CD8-positive, alpha-beta T cell (primary cell): ENCODE measurements at regions of chr2 and their contacts with region 1.

Region 1: DNA sequence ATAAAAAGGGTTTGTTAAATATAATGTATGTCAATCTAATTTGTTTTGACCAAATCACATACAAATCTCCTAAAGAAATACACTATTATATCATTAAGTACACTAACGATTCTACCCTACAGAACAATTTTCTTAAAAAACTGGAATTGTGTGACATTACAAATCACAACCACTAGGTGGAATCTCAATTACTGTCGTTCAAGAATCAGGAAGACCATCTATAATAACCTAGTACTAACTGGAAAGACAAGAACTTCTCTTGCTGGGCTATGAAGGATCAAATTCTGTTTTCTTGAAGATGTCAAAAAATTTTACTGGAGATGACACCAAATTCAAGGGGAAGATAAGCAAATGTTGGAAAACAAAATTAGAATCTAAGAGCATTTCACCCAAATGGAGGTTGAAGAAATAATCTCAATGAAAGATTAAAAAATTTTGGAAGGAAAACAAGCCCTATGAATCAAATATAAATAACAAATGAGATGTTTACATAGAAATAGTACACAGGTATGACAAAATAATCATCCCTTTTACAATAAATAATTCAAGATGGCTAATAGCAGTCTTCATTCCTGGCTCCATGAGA is 110.9 kb downstream of the STK39 start:
- DNase-seq: peak in 2 of 9 experiments; percentile 49 to 61
- ATAC-seq: peak; percentile 54
- H3K4me3 ChIP-seq: no peak overlapping the region
- H3K4me3 Mint-ChIP-seq: no peak overlapping the region
- H3K27ac ChIP-seq: no peak overlapping the region
- H3K27ac Mint-ChIP-seq: peak overlapping the region; percentile 75
- H3K4me1 ChIP-seq: no peaks in the 10 kb centered on the region
- H3K4me1 Mint-ChIP-seq: peaks cover 5% of the 10 kb centered on the region
- H3K27me3 ChIP-seq: no peaks in the 10 kb centered on the region
- H3K27me3 Mint-ChIP-seq: no peaks in the 10 kb centered on the region
- CTCF ChIP-seq: peak; percentile 65

Region 2: DNA sequence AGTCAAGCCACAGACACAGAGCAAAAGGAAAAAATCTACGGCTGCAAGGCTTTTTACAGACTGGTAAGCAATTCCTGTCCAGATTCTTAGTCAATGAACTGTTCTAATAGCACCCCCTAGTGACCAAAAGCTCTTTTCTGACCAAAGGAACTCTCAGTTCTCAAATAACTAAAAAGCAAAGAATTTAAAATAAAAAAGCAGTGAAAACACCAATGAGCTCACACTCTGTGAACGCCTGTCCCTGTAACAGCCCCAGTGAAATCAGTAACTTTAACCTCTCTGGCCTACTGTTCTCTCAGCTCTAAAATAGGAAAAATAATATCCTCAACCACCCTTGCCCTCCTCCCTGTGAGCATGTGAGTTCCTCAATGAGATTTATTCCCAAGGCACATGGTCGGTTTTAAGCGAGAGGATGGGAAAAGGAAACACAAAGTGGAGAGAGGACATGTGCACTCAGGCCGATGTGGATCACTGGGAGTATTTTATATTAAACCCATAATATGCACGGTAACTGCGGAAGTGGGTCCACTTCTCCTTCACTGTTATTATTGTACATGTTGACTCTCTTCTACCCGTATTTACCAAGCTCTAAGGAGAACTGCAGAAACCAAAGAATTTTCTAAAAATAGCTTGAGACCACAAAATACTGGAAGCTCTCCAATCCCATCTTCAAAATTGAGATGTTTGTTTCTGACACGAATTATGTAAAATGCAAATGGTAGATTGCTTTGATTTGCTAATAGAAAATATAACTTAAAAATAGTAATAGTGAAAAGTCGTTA is 17.6 kb before region 1 on chr2:
- CTCF ChIA-PET with region 1: interaction called, 12 read pairs
- POLR2A ChIA-PET with region 1: interaction called, 3 read pairs
- intact Hi-C with region 1: no loop called
- DNase-seq: peak in 3 of 9 experiments; percentile 8 to 58 (median 48)
- ATAC-seq: no peak
- H3K4me3 ChIP-seq: no peak overlapping the region
- H3K4me3 Mint-ChIP-seq: no peak overlapping the region
- H3K27ac ChIP-seq: no peak overlapping the region
- H3K27ac Mint-ChIP-seq: no peak overlapping the region
- H3K4me1 ChIP-seq: no peaks in the 10 kb centered on the region
- H3K4me1 Mint-ChIP-seq: no peaks in the 10 kb centered on the region
- H3K27me3 ChIP-seq: no peaks in the 10 kb centered on the region
- H3K27me3 Mint-ChIP-seq: no peaks in the 10 kb centered on the region
- CTCF ChIP-seq: peak; percentile 54

Region 3: DNA sequence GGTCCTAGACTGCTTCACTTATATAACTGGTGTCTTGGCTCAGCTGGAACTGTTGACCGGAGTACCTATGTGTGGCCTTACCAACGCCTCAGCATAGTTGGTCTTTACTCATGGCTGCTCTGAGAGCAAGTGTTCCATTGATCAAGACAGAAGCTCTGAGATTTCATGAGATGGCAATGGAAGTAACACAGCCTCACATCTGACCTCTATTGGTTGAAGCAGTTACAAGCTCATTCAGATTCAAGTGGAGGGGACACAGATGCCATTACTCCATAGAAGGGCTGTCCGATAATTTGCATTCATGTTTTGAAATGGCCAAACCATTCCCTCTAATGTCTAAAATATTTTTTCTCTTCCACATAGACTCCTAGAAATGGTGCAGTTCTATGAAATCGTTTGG is 157.3 kb after region 1 on chr2:
- CTCF ChIA-PET with region 1: interaction called, 4 read pairs
- POLR2A ChIA-PET with region 1: no interaction called
- intact Hi-C with region 1: loop called (anchors 2 to 5 kb)
- DNase-seq: peak in 2 of 9 experiments; percentile 10 to 24
- ATAC-seq: no peak
- H3K4me3 ChIP-seq: no peak overlapping the region
- H3K4me3 Mint-ChIP-seq: no peak overlapping the region
- H3K27ac ChIP-seq: no peak overlapping the region
- H3K27ac Mint-ChIP-seq: no peak overlapping the region
- H3K4me1 ChIP-seq: no peaks in the 10 kb centered on the region
- H3K4me1 Mint-ChIP-seq: no peaks in the 10 kb centered on the region
- H3K27me3 ChIP-seq: no peaks in the 10 kb centered on the region
- H3K27me3 Mint-ChIP-seq: no peaks in the 10 kb centered on the region
- CTCF ChIP-seq: no peak

Region 4: GRCh38 chr2:168687314-168687713 is 550.8 kb after region 1 on chr2:
- CTCF ChIA-PET with region 1: no interaction called
- POLR2A ChIA-PET with region 1: no interaction called
- intact Hi-C with region 1: loop called in 1 of 2 experiments (anchors 10 kb)
- DNase-seq: peak in 3 of 9 experiments; percentile 11 to 39 (median 20)
- ATAC-seq: no peak
- H3K4me3 ChIP-seq: no peak overlapping the region
- H3K4me3 Mint-ChIP-seq: no peak overlapping the region
- H3K27ac ChIP-seq: no peak overlapping the region
- H3K27ac Mint-ChIP-seq: no peak overlapping the region
- H3K4me1 ChIP-seq: no peaks in the 10 kb centered on the region
- H3K4me1 Mint-ChIP-seq: peaks cover 3% of the 10 kb centered on the region
- H3K27me3 ChIP-seq: no peaks in the 10 kb centered on the region
- H3K27me3 Mint-ChIP-seq: no peaks in the 10 kb centered on the region
- CTCF ChIP-seq: peak; percentile 38

Region 5: DNA sequence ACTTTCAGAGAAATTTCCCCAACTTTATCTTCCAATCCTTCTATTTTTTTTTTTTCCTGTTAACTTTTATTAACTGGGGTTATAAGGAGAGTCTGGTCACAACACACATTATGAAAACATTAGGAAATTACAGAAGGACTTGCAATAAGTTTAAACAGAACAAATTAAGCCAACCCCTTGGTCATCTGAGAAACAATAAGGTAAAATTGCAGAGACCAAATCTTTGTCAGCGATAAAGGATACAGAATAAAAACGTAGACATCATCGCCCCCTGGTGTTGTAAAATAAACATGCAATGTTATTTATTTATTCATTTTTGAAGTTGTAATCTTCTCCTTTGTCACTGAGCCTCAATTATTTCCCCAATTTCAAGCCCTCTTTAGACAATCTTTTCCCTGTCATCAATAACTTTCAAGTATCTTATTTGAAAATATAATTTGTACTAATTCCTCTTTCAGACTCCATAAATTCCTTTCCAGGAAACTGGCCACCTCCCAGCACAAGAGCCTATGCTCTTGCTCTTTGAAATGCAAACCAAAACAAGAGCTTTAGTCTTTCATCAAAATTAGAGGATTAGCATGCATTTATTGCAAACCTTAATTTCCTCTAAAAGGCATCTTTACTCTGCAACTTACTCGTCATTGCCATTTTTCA is 784.1 kb after region 1 on chr2:
- CTCF ChIA-PET with region 1: interaction called, 3 read pairs
- POLR2A ChIA-PET with region 1: no interaction called
- intact Hi-C with region 1: loop called in 1 of 2 experiments (anchors 1 kb)
- DNase-seq: peak in 2 of 9 experiments; percentile 52 to 59
- ATAC-seq: no peak
- H3K4me3 ChIP-seq: no peak overlapping the region
- H3K4me3 Mint-ChIP-seq: no peak overlapping the region
- H3K27ac ChIP-seq: no peak overlapping the region
- H3K27ac Mint-ChIP-seq: no peak overlapping the region
- H3K4me1 ChIP-seq: no peaks in the 10 kb centered on the region
- H3K4me1 Mint-ChIP-seq: no peaks in the 10 kb centered on the region
- H3K27me3 ChIP-seq: no peaks in the 10 kb centered on the region
- H3K27me3 Mint-ChIP-seq: peaks cover 17% of the 10 kb centered on the region
- CTCF ChIP-seq: peak; percentile 84